ENCODE measurements at regions of chr17 and their contacts with region 1.

Region 1: DNA sequence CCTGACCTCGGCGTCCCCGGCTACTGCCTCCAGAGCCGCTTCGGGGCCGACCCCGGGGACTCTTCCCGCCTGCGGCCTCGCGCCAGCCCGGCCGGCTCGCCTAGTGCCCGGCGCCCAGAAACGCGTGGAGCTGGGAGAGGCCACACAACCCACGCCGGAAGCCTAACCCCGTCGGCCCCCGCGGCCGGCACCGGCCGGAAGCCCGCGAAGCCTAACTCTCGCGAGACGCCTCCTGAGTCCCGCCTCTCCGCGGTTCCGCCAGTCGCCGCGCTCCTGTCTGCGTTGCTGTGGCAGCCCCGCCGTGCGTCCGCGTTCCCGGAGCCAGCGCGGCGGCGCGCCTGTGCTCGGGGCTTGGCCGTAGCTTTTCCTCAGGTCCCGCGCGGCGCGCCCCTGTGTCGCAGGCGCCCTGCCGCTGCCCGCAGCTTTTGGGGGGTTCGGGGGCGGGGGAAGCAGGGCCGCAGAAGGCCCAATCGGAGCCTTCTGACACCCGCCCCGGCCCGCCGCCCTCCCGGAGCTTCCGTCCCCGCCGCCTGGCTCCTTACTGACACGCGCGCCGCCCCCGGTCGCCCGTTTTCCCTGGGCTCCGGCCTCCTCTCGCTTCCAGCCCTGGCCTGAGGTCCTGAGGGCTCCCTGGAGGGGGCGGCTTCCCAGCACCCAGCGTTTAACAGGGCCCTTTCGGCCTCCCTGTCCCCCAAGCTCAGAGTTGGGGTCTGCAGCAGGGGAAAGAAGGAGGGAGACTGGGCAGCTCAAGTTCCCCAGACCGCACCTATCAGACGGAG is 21.7 kb downstream of the NPTX1 start:
- DNase-seq: peak; percentile 90 to 98 (median 95)
- ATAC-seq: peak; percentile 95
- H3K4me3 ChIP-seq: peak overlapping the region; percentile 68
- H3K4me3 Mint-ChIP-seq: peak overlapping the region; percentile 90
- H3K27ac ChIP-seq: peak overlapping the region; percentile 93
- H3K27ac Mint-ChIP-seq: peak overlapping the region; percentile 94
- H3K4me1 ChIP-seq: peaks cover 17% of the 10 kb centered on the region
- H3K4me1 Mint-ChIP-seq: peaks cover 15% of the 10 kb centered on the region
- H3K27me3 ChIP-seq: peaks cover 0 to 21% of the 10 kb centered on the region in 2 experiments
- H3K27me3 Mint-ChIP-seq: peaks cover 23% of the 10 kb centered on the region
- CTCF ChIP-seq: no peak

Region 2: DNA sequence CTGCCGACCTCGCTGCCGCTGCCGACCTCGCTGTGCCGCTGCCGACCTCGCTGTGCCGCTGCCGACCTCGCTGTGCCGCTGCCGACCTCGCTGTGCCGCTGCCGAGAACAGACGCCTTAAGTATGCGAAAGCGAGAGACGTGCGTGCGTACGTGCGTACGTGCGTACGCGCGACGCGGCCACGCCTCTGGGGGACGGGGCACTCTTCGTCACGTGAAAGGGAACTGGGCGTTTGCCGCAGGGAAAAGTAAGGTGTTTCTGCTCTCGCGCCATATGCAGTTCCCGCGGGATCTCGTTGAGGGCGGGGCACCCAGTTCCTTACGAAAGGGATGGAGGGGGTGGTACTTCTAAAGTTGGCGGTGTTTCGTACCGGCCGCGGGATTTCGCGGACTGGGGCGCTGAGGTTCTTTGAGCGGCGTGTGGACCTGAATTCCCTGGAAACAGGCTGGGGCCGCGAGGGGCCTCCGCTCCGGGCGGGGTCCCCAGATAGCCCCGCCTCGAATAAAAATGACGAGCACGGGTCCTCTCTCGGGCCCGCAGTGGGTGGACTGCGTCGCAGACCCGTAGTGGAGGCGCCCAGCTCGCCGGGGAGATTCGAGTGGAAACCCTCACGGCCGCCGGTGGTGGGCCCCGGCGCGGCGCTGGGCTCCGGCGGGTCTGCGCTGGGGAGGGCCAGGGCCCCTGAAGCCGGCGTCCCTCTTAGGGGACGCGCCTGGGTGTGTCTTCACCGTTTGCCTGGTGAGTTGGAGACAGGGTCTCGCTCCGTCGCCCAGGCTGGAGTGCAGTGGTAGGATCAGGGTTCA is 307.5 kb before region 1 on chr17 and contains the start of gene EIF4A3:
- CTCF ChIA-PET with region 1: no interaction called
- POLR2A ChIA-PET with region 1: no interaction called
- intact Hi-C with region 1: loop called in 1 of 2 experiments (anchors 10 kb)
- DNase-seq: peak; percentile 91 to 100 (median 95)
- ATAC-seq: peak; percentile 90
- H3K4me3 ChIP-seq: peak within 1 kb of the TSS; percentile 95
- H3K4me3 Mint-ChIP-seq: peak within 1 kb of the TSS; percentile 99
- H3K27ac ChIP-seq: peak within 1 kb of the TSS; percentile 84 to 93
- H3K27ac Mint-ChIP-seq: peak within 1 kb of the TSS; percentile 95
- H3K4me1 ChIP-seq: peaks cover 45% of the 10 kb centered on the region
- H3K4me1 Mint-ChIP-seq: peaks cover 49% of the 10 kb centered on the region
- H3K27me3 ChIP-seq: no peaks in the 10 kb centered on the region
- H3K27me3 Mint-ChIP-seq: no peaks in the 10 kb centered on the region
- CTCF ChIP-seq: no peak
- total RNA-seq, gene EIF4A3: 79.6 to 79.7 TPM

Region 3: DNA sequence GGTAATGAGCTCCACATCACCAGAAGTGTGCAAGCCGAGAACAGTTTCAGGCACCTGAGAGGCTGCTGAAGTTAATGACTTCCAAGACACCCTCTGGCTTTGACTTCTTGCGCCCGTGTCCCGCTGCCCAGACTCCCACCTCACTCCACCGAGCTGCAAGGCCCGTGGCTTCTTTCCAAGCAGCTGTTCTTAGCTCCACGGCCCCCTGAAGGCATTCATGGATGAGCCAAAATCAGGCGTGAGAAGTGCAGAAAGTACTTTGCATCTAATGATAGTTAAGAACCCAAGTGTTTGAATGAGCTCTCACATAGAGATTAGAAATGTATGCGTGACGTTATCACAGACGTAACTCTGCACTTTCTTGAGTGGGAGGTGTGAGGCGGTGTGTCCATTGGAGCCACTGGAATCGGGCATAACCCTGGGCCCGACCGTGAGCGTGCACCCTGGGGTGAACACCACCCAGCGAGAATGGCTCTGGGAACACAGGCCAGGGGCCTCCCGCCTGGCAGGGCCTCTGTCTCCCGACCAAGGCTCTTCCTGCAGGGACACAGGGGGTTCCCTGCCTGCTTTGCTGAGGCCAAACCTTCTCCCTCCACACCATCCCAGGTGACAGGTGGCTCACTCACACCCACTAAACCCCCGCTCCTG is 10.7 kb after region 1 on chr17:
- CTCF ChIA-PET with region 1: no interaction called
- POLR2A ChIA-PET with region 1: interaction called, 13 read pairs
- intact Hi-C with region 1: no loop called
- DNase-seq: no peak
- ATAC-seq: no peak
- H3K4me3 ChIP-seq: no peak overlapping the region
- H3K4me3 Mint-ChIP-seq: no peak overlapping the region
- H3K27ac ChIP-seq: no peak overlapping the region
- H3K27ac Mint-ChIP-seq: no peak overlapping the region
- H3K4me1 ChIP-seq: no peaks in the 10 kb centered on the region
- H3K4me1 Mint-ChIP-seq: no peaks in the 10 kb centered on the region
- H3K27me3 ChIP-seq: peaks cover 23 to 47% of the 10 kb centered on the region in 2 experiments
- H3K27me3 Mint-ChIP-seq: peaks cover 50% of the 10 kb centered on the region
- CTCF ChIP-seq: no peak

Region 4: DNA sequence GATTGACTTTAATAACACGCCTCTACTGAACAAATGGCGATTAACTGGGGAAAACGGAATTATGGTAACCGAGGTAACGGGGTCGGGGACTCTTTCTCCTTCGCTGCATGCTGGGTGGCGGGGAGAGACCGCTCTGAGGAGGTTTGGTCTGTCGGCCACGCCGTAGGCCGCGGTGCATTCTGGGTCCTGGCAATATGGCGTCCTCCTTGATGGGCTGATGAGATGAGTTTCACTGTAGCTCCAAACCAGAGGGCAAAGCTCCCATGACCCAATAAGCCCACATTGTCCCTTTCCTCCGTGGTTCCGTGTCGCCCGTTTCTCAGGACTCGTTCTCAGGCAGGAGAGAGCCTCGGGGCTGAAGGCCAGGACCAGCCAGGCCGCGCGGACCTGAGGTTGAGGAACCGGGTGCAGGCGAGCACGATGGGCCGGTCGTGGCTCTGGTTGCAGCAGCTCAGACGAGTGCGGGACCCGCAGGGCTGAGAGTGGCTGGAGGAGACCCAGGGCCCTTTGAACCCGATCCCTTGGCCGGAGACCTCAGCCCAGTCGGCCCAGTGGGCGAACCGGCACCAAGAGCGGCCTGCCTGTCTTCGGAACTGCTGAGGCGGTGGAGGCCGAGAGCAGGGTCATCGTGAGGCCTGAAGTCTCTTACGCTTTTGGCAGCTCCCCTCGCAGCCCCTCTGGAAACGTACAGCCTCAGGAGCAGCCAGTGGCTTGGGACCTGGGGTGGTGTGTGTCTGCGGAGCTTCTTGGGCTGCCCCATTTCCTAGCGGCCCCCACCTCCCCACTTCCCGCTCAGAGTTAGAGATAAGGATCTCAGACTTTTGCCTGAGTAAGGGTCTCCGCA is 90.1 kb after region 1 on chr17 and contains the start of gene RPTOR:
- CTCF ChIA-PET with region 1: no interaction called
- POLR2A ChIA-PET with region 1: interaction called, 10 read pairs
- intact Hi-C with region 1: loop called in 1 of 2 experiments (anchors 1 kb)
- DNase-seq: peak; percentile 80 to 92 (median 84)
- ATAC-seq: peak; percentile 99
- H3K4me3 ChIP-seq: peak within 1 kb of the TSS; percentile 98
- H3K4me3 Mint-ChIP-seq: peak within 1 kb of the TSS; percentile 92
- H3K27ac ChIP-seq: peak within 1 kb of the TSS; percentile 28 to 56
- H3K27ac Mint-ChIP-seq: peak within 1 kb of the TSS; percentile 83
- H3K4me1 ChIP-seq: peaks cover 20% of the 10 kb centered on the region
- H3K4me1 Mint-ChIP-seq: peaks cover 36% of the 10 kb centered on the region
- H3K27me3 ChIP-seq: peaks cover 0 to 2% of the 10 kb centered on the region in 2 experiments
- H3K27me3 Mint-ChIP-seq: peaks cover 8% of the 10 kb centered on the region
- CTCF ChIP-seq: no peak
- total RNA-seq, gene RPTOR: 45.0 to 47.1 TPM

Region 5: DNA sequence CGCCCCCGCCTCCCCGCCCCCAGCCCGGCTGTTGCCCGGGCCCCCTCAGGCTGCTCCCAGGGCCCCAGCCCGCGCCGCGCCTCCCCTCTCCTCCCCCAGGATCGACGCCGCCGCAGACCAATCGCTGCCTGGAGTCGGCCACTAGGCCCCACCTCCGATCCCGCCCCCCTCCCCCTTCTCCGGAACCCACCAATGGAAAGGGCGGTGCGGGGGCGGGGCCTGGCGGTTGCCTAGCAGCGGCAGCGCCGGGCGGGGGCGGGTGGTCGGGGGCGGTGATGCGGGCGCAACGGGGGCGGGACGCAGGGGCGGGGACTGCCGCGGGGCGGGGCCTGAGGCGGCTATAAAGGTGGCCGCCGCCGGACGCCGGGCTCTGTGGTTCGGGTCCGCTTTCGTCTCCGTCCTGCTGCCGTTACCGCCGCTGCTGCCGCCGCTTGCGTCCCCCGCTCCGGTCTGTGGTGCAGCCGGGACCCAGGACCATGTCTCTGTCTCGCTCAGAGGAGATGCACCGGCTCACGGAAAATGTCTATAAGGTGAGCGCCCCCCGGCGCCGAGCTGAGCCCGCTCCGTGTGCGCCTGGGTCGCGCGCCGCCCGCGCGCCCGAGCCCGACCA is 580.1 kb after region 1 on chr17 and contains the start of gene BAIAP2:
- CTCF ChIA-PET with region 1: interaction called, 3 read pairs
- POLR2A ChIA-PET with region 1: no interaction called
- intact Hi-C with region 1: loop called in 1 of 2 experiments (anchors 5 kb)
- DNase-seq: peak; percentile 96 to 100 (median 98)
- ATAC-seq: peak; percentile 86
- H3K4me3 ChIP-seq: peak within 1 kb of the TSS; percentile 60
- H3K4me3 Mint-ChIP-seq: peak within 1 kb of the TSS; percentile 98
- H3K27ac ChIP-seq: no peak within 1 kb of the TSS
- H3K27ac Mint-ChIP-seq: peak within 1 kb of the TSS; percentile 82
- H3K4me1 ChIP-seq: peaks cover 25% of the 10 kb centered on the region
- H3K4me1 Mint-ChIP-seq: peaks cover 28% of the 10 kb centered on the region
- H3K27me3 ChIP-seq: peaks cover 0 to 2% of the 10 kb centered on the region in 2 experiments
- H3K27me3 Mint-ChIP-seq: peaks cover 1% of the 10 kb centered on the region
- CTCF ChIP-seq: no peak
- total RNA-seq, gene BAIAP2: 4.2 to 4.9 TPM

Measured in CD4-positive, alpha-beta T cell (primary cell).